Psoas muscle (tissue), 8 donors: ENCODE measurements at regions of chr15 and their contacts with region 1.

Region 1: GRCh38 chr15:53251996-53252395 is 461.9 kb upstream of the ONECUT1 start:
- DNase-seq: no peak
- ATAC-seq: no peak
- H3K4me3 ChIP-seq: no peak overlapping the region
- H3K27ac ChIP-seq: no peak overlapping the region
- H3K4me1 ChIP-seq: no peaks in the 10 kb centered on the region
- H3K27me3 ChIP-seq: no peaks in the 10 kb centered on the region
- CTCF ChIP-seq: no peak

Region 2: GRCh38 chr15:53129121-53129904 is 122.7 kb before region 1 on chr15:
- intact Hi-C with region 1: loop called in 1 of 2 experiments (anchors 10 kb)
- DNase-seq: no peak
- ATAC-seq: no peak
- H3K4me3 ChIP-seq: no peak overlapping the region
- H3K27ac ChIP-seq: no peak overlapping the region
- H3K4me1 ChIP-seq: no peaks in the 10 kb centered on the region
- H3K27me3 ChIP-seq: peaks cover 0 to 1% (median 0%) of the 10 kb centered on the region in 3 donors
- CTCF ChIP-seq: no peak

Region 3: GRCh38 chr15:53225781-53226180 is 26.2 kb before region 1 on chr15:
- intact Hi-C with region 1: loop called in 1 of 2 experiments (anchors 2 kb)
- DNase-seq: no peak
- ATAC-seq: no peak
- H3K4me3 ChIP-seq: no peak overlapping the region
- H3K27ac ChIP-seq: no peak overlapping the region
- H3K4me1 ChIP-seq: no peaks in the 10 kb centered on the region
- H3K27me3 ChIP-seq: no peaks in the 10 kb centered on the region
- CTCF ChIP-seq: no peak

Region 4: DNA sequence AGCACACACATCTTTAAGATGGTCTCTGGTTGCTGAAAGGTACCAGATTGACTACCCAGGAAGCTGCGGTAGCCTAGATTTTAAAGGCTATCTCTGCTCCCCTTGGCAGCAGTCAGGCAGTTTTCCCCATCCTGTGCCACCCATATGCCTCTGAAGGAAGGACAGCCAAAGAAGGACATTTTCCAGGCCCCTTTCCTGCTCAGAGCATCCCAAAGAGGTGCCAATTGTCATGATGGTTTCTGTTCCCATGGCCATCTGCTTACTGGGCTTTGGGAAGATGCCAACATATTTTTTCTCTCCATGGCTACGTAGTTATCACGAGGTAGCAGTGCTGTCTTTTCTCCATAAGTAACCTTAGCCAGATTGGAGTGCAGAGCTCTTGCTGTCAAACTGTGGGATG is 766.0 kb after region 1 on chr15:
- intact Hi-C with region 1: loop called in 1 of 2 experiments (anchors 10 kb)
- DNase-seq: no peak
- ATAC-seq: peak in 3 of 4 donors; percentile 39 to 53 (median 41)
- H3K4me3 ChIP-seq: no peak overlapping the region
- H3K27ac ChIP-seq: no peak overlapping the region
- H3K4me1 ChIP-seq: no peaks in the 10 kb centered on the region
- H3K27me3 ChIP-seq: no peaks in the 10 kb centered on the region
- CTCF ChIP-seq: no peak

Region 5: GRCh38 chr15:54815556-54815955 is 1563.6 kb after region 1 on chr15:
- intact Hi-C with region 1: loop called in 1 of 2 experiments (anchors 5 kb)
- DNase-seq: no peak
- ATAC-seq: no peak
- H3K4me3 ChIP-seq: no peak overlapping the region
- H3K27ac ChIP-seq: no peak overlapping the region
- H3K4me1 ChIP-seq: no peaks in the 10 kb centered on the region
- H3K27me3 ChIP-seq: peaks cover 0 to 4% (median 0%) of the 10 kb centered on the region in 3 donors
- CTCF ChIP-seq: no peak